IMR-90 (cell line): ENCODE measurements at regions of chr2 and their contacts with region 1.

Region 1: GRCh38 chr2:186544255-186544675 is 45.6 kb upstream of the ITGAV start:
- DNase-seq: peak; percentile 93
- ATAC-seq: peak; percentile 75
- H3K4me3 ChIP-seq: no peak overlapping the region; the same call in 1 of the 2 replicates
- H3K27ac ChIP-seq: peak overlapping the region; percentile 77; the same call in 1 of the 2 replicates
- H3K4me1 ChIP-seq: peaks cover 13% of the 10 kb centered on the region
- H3K27me3 ChIP-seq: no peaks in the 10 kb centered on the region
- CTCF ChIP-seq: no peak
- POLR2A ChIP-seq: peak; percentile 19; the same call in 1 of the 2 replicates
- RAD21 ChIP-seq: 0 out of 2 replicates have a peak, but pooled peaks have one; percentile 18

Region 2: GRCh38 chr2:186440537-186440936 is 103.7 kb before region 1 on chr2:
- CTCF ChIA-PET with region 1: no interaction called
- POLR2A ChIA-PET with region 1: no interaction called
- dilution Hi-C with region 1: no loop called
- in situ Hi-C with region 1: no loop called
- intact Hi-C with region 1: no loop called
- DNase-seq: no peak
- ATAC-seq: no peak
- H3K4me3 ChIP-seq: no peak overlapping the region
- H3K27ac ChIP-seq: no peak overlapping the region
- H3K4me1 ChIP-seq: no peaks in the 10 kb centered on the region
- H3K27me3 ChIP-seq: no peaks in the 10 kb centered on the region
- CTCF ChIP-seq: no peak
- POLR2A ChIP-seq: no peak
- RAD21 ChIP-seq: no peak

Region 3: DNA sequence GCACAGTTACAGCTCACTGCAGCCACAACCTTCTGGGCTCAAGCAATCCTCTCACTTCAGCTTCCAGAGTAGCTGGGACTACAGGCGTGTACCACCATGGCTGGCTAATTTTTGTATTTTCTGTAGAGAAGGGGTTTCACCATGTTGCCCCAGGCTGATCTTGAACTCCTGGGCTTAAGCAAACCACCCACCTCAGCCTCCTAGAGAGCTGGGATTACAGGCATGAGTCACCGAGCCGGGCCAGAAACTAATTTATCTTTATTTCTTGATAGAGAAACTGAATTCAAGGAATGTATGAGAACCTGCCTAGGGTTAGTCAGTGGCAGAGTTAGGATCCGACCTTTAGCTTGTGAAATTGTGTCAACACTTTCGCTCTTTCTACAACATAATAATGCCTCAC is 26.3 kb after region 1 on chr2:
- CTCF ChIA-PET with region 1: interaction called, 3 read pairs
- POLR2A ChIA-PET with region 1: no interaction called
- dilution Hi-C with region 1: no loop called
- in situ Hi-C with region 1: no loop called
- intact Hi-C with region 1: loop called (anchors 2 kb)
- DNase-seq: peak; percentile 60
- ATAC-seq: peak; percentile 60
- H3K4me3 ChIP-seq: no peak overlapping the region
- H3K27ac ChIP-seq: no peak overlapping the region
- H3K4me1 ChIP-seq: no peaks in the 10 kb centered on the region; the same call in 1 of the 2 replicates
- H3K27me3 ChIP-seq: no peaks in the 10 kb centered on the region
- CTCF ChIP-seq: no peak
- POLR2A ChIP-seq: no peak
- RAD21 ChIP-seq: no peak